T-cell (primary cell): ENCODE measurements at regions of chr11 and their contacts with region 1.

Region 1: GRCh38 chr11:74726547-74727182 is 4.6 kb downstream of the CHRDL2 start:
- DNase-seq: peak; percentile 12 to 70 (median 41)
- ATAC-seq: peak; percentile 87 to 94 (median 92)
- H3K4me3 ChIP-seq: no peak overlapping the region
- H3K4me3 Mint-ChIP-seq: no peak overlapping the region
- H3K27ac ChIP-seq: no peak overlapping the region
- H3K27ac Mint-ChIP-seq: no peak overlapping the region
- H3K4me1 ChIP-seq: peaks cover 0 to 7% of the 10 kb centered on the region in 2 experiments
- H3K4me1 Mint-ChIP-seq: peaks cover 5 to 12% (median 8%) of the 10 kb centered on the region in 3 donors
- H3K27me3 ChIP-seq: peaks cover 6 to 28% of the 10 kb centered on the region in 2 experiments
- H3K27me3 Mint-ChIP-seq: peaks cover 18 to 32% of the 10 kb centered on the region in 2 donors

Region 2: DNA sequence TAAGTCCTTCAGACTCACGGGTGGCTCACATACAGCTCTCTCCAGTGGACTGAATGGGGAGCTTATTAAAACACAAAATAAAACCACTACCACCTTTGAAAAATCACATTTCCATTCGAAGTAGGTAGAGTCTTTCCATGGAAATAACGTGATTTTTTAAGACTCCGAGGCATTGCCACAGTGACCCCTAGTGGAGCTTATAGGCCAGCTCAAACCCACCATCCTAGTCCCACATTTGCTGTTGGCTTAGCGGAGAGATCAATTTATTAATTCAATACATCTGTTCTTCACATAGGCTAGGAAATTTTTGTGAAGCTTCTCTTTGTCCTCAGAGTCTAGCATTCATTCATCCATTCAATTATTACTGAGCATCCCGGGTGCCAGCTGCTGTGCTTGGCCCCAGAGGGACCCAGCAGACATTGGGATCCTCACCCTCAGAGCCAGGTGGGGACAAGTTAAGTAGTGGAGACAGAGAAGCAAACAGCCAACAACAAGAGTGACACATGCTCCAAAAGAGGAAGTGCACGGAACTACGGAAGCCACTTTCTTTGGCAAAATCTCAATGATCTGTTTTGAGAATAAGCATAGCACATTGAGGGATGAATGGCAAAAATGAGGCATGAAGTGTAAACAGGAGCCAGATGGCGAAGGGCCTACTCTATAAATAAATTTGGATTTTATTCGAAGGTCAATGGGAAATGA is 405.0 kb before region 1 on chr11:
- CTCF ChIA-PET with region 1: interaction called in 1 of 2 experiments, 13 read pairs
- POLR2A ChIA-PET with region 1: no interaction called
- DNase-seq: peak in 6 of 35 experiments; percentile 2 to 57 (median 10)
- ATAC-seq: peak in 1 of 4 experiments; percentile 45
- H3K4me3 ChIP-seq: no peak overlapping the region
- H3K4me3 Mint-ChIP-seq: no peak overlapping the region
- H3K27ac ChIP-seq: no peak overlapping the region
- H3K27ac Mint-ChIP-seq: no peak overlapping the region
- H3K4me1 ChIP-seq: no peaks in the 10 kb centered on the region
- H3K4me1 Mint-ChIP-seq: peaks cover 0 to 2% (median 0%) of the 10 kb centered on the region in 3 donors
- H3K27me3 ChIP-seq: peaks cover 0 to 15% of the 10 kb centered on the region in 2 experiments
- H3K27me3 Mint-ChIP-seq: peaks cover 3 to 20% of the 10 kb centered on the region in 2 donors

Region 3: GRCh38 chr11:74702383-74703007 is 24.2 kb before region 1 on chr11:
- CTCF ChIA-PET with region 1: interaction called in 1 of 2 experiments, 18 read pairs
- POLR2A ChIA-PET with region 1: no interaction called
- DNase-seq: peak; percentile 14 to 73 (median 42)
- ATAC-seq: peak; percentile 54 to 75 (median 67)
- H3K4me3 ChIP-seq: no peak overlapping the region
- H3K4me3 Mint-ChIP-seq: no peak overlapping the region
- H3K27ac ChIP-seq: no peak overlapping the region
- H3K27ac Mint-ChIP-seq: no peak overlapping the region
- H3K4me1 ChIP-seq: no peaks in the 10 kb centered on the region
- H3K4me1 Mint-ChIP-seq: peaks cover 0 to 4% (median 0%) of the 10 kb centered on the region in 3 donors
- H3K27me3 ChIP-seq: peaks cover 0 to 9% of the 10 kb centered on the region in 2 experiments
- H3K27me3 Mint-ChIP-seq: peaks cover 0 to 5% of the 10 kb centered on the region in 2 donors